GM10248 (cell line): ENCODE measurements at regions of chr12 and their contacts with region 1.

Region 1: DNA sequence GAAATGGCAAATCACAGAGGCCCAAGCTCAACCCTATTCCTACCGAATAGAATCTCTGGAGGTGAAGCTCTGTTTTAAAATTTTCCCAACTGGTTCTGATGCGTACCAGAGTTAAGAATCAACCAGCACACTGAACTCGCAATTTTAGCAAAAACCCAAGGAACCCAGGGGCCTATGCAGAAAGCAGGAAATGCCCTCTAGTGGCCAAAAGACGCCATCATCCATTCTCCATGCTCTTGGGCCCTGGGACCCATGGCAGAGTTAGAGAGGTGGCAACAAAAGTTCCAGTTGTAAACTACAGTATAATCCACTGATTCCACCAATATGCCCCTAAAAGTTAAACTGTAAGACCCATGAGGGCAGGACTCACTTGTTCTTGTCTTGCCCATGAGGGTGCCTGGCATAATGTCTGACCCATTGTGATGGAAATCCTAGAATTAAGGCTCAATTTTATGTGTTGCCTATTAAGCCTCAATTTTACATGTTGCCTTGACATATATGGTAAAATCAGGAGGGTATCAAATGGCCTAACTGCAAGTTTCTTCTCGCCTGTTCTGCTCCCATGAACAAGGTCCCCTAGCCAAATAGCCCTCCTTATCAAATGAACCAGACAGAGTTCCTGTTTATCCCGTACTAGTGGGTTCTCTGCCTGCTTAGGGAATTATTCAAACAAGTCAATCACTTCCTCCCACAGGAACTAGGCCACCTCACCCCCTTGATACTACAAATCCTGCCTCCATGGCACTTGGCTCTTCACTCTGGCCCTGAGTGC is 137.5 kb upstream of the CPM start:
- DNase-seq: peak; percentile 59
- CTCF ChIP-seq: peak; percentile 83

Region 2: DNA sequence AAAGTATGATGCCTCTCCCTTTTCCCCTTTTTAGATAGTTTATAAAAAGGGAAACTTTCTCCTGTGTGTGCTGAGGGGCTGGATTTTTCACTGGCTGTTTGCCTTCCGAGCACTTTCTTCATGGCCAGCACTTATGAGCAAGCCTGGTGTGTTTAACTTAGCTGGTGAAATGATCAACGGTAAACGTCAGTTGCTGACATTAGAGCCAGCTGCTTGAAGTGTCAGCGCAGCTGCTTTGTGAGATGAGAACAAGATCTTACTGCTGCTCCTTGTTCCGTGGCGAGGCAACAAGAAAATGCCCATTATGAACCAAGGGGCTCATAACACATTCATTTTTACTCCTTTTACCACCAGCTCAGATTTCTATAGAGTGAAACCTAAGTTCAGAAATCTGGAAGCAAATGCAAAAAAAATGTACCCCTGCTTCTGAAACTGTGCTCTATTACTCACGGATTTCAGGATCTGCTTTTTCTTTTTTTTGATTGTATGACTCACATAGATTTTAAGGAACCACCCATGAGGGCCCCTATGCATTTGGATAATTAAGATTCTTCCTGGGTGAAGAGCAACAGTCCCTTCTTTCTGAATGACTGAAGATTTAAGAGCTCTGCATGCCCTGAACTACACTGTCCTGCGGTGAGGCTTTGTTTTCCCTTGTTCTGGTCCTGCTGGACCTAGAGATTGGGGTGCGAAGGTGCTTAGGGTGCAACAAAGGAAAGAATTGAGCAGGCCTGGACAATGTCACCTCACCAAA is 63.2 kb before region 1 on chr12:
- CTCF ChIA-PET with region 1: no interaction called
- POLR2A ChIA-PET with region 1: no interaction called
- DNase-seq: no peak
- CTCF ChIP-seq: no peak

Region 3: DNA sequence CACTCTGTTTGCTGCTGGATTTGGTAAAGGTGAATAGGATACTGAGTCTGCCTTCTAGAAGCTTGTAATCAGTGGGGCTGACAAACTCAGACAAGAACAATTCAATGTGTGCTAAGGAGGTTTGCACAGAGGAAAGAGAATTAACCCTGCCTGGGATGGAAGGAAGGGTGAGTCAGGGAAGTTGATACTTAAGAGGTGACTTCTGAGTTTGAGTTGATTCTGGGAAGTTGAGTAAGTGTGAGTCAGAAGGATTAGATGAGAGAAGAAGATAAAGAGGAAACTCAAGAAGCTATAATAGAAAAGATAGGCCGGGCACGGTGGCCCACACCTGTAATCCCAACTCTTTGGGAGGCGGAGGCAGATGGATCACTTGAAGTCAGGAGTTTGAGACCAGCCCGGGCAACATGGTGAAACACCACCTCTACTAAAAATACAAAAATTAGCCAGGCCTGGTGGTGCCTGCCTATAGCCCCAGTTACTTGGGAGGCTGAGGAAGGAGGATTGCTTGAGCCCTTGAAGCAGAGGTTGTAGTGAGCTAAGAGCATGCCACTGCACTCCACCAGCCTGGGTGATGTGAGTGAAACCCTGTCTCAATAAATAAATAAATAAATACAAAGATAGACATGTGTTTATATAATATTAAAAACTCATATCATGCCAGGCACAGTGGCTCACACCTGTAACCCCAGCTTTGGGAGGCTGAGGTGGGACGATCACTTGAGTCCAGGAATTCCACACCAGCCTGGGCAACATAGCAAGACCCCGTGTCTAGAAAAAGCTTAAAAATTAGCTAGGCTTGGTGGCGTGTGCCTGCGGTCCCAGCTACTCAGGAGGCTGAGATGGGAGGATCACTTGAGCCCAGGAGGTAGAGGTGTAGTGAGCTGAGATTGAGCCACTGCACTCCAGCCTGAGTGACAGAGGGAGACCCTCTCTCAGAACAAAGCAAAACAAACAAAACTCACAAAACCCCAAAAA is 10.7 kb before region 1 on chr12:
- CTCF ChIA-PET with region 1: interaction called, 13 read pairs
- POLR2A ChIA-PET with region 1: no interaction called
- DNase-seq: no peak
- CTCF ChIP-seq: no peak

Region 4: DNA sequence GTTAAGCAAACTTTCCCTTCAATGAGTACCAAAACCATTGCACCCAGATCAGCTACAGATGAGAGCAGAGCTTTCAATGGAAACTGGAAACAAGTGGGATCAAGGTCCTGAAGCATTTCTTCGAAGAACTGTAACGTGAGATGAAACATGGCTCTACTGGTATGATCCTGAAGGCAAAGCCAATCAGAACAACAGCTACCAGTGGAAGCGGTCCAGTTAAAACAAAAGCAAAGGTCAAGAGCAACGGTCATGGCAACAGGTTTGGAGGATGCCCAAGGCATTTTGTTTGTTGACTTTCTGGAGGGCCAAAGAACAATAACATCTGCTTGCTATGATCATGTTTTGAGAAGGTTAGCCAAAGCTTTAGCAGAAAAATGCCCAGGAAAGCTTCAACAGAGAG is 31.0 kb after region 1 on chr12:
- CTCF ChIA-PET with region 1: no interaction called
- POLR2A ChIA-PET with region 1: no interaction called
- DNase-seq: no peak
- CTCF ChIP-seq: no peak